ENCODE measurements at regions of chr7 and their contacts with region 1.

Region 1: DNA sequence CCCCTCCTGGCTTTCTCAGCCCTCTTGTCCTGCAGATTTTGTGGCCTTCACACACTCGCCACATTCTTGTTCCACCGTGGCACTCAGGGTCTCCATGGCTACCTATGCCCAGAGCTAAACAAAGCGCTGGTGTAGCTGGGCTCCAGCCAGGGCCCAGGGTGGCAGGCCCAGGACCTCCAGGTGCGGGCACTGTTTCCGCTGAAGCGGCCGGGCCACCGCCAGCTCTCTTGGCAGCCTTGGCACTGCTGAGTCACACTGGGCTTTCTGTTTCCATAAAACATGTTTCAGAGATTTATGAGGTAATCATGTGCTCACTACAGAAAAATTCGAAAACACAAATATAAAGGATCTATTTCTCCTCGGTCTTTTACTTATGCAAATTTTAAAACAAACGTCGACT is 51.3 kb downstream of the AOC1 start:
- DNase-seq: peak; percentile 85
- ATAC-seq: peak; percentile 94

Region 2: DNA sequence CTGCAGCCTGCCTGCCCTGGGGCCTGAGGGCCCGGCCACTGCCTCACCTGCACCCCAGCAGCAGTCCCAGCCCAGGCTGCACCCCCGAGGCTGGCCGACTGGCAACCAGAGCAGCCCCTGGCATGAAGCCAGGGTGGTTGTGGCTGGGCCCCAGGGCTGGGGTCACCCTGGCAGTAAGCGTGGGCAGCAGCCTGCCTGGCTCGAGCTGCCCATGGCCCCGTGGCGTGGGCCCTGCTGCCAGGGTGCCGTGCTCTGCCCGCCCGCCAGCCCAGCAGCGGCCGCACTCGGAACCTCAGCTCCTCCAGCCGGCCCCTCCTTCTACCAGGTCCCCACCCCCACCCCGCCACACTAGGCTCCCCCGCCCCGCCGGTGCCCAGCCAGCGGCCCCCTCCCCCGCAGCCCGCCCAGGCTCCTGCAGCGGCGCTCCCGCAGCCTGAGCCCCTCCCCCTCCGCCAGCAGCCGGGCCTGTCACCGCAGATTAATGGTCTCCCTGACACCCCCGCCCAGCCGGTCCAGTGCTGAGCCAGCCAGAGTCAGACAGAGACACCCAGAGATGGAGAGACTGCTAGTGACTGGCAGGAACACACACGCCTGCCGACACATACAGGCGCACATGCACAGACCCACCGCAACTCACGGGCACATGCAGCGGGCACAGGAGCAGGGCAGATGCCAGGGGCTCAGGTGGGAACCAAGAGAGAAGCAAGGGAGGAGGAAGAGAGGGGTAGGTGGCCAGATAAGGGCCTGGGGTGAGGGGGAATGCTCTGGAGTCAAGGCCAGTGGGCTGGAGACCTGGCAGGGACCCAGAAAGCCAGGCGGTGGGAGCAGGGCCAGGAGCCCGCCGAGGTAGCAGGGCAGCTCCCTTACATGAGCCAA is 52.2 kb after region 1 on chr7:
- intact Hi-C with region 1: loop called (anchors 5 kb)
- DNase-seq: peak; percentile 78
- ATAC-seq: peak; percentile 55

Region 3: DNA sequence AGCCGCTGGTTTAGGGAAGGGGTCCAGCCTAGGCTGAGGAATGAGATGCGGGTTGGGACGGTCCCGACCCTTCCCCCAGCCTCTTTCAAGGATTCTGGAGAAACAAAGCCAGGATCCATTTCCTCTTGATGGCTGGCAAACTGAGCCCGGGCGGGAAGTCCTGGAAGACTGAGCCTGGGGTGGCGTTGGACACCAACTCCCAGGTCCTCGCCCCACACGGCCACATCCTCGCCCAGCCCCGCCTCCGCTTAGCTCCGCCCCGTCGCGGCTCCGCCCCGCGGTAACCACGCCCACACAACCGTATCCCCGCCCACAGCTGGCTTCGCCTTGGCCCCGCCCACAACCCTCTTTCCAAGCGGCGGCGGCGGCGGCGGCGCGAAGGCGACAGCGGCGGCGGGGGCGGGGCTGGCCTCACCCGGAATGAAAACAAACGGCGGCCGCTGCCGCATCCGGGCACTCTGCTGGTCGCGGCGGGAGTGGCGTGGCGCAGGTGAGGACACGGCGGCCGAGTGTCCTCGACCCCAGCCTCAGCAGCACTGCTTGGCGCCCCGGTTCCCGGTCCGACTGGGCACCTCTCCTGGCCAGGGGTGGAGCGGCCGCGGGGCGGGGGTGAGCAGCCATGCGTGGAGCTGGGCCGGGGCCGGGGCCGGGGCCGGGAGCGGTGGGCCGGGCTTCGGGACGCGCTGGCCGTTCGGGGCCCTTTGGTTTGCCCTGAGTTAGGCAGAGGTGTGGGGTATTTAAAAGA is 437.9 kb after region 1 on chr7 and contains the start of gene NUB1:
- intact Hi-C with region 1: no loop called
- DNase-seq: peak; percentile 96
- ATAC-seq: peak; percentile 100
- total RNA-seq, gene NUB1: 30.8 TPM

Measured in Right ventricle myocardium superior (tissue), 1 donor.